ENCODE measurements at regions of chr3 and their contacts with region 1.

Region 1: GRCh38 chr3:115783938-115784738 is 160.8 kb downstream of the GAP43 start:
- DNase-seq: peak; percentile 92
- H3K4me3 Mint-ChIP-seq: peak overlapping the region; percentile 88
- H3K27ac Mint-ChIP-seq: peak overlapping the region; percentile 94
- H3K4me1 Mint-ChIP-seq: peaks cover 19% of the 10 kb centered on the region
- H3K27me3 Mint-ChIP-seq: no peaks in the 10 kb centered on the region

Region 2: DNA sequence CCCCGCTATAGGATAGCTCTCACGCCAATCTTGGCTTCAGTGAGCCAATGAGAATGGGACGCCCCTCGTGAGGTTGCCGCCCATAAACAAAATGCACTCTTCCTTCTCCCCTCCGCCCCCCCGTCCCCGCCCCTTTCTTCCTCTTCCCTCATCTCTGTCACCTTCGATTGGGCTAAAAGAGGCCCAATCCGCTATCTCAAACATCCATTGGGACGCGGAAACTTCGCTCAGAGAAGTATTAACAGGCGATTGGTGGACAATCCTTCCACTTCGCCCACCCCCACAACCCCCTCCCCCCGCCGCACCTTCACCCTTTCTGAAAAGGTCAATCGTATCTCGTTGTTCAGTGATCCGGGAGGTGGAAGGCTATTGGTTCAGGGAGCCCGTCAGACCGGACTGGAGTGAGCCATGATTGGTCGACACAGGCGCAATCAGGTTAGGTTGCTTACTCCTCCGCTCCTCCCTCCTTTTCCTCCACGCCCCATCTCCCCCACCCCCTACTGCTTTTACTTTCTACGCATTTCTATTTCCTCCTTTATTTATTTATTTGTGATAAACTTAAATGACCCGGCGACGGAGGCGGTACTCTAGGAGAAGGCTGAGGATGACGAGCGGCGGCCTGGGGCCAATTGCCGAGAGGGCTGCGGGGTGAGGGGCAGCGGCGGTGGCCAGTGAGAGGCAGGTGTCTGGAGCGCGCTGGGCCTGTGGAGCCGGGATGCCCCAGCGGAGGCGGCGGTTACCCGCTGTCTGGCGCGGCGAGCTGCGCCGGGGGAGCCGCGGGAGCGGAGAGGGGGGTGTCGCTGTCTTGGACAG is 636.6 kb before region 1 on chr3:
- CTCF ChIA-PET with region 1: interaction called, 16 read pairs
- POLR2A ChIA-PET with region 1: interaction called, 3 read pairs
- intact Hi-C with region 1: loop called (anchors 1 kb)
- DNase-seq: peak; percentile 98
- H3K4me3 Mint-ChIP-seq: peak overlapping the region; percentile 94
- H3K27ac Mint-ChIP-seq: peak overlapping the region; percentile 91
- H3K4me1 Mint-ChIP-seq: peaks cover 23% of the 10 kb centered on the region
- H3K27me3 Mint-ChIP-seq: peaks cover 2% of the 10 kb centered on the region

Region 3: DNA sequence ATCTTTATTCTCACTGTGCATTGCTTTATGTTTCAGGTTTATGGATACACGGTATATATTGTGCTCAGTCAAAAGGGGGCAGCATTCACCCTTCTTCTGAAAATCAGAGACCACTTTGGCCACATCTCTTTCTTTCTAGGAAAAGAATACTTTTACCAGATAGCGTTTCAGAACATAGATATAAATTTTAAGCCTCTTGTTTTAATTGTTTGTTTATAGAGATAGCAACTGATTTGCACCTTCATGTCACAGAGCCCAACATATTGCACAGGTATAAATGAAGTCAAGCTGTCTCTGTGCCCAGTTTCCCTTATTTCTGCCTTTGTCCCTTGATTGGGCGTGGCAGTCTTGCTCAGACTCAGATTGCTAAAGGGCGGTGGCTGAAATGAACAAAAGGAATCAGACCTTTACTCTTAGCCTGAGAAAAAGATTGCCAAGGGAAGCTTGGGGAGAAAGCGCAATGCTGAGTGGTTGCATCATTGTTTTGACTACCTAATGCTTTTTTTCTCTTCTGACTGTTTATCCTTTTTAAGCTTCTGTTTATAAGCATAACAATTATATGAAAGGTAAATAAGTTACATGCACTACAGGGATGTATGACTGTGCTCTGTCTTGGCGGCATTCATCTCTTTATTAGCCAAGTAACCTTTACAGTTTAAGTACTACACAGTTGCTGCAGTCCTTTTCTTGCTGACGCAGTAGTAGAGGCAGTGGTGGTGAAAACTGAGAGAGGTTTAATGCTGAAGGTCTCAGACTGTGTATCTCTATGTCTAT is 566.3 kb before region 1 on chr3:
- CTCF ChIA-PET with region 1: interaction called, 6 read pairs
- POLR2A ChIA-PET with region 1: no interaction called
- intact Hi-C with region 1: loop called (anchors 10 kb)
- DNase-seq: no peak
- H3K4me3 Mint-ChIP-seq: no peak overlapping the region
- H3K27ac Mint-ChIP-seq: no peak overlapping the region
- H3K4me1 Mint-ChIP-seq: no peaks in the 10 kb centered on the region
- H3K27me3 Mint-ChIP-seq: peaks cover 2% of the 10 kb centered on the region

Region 4: DNA sequence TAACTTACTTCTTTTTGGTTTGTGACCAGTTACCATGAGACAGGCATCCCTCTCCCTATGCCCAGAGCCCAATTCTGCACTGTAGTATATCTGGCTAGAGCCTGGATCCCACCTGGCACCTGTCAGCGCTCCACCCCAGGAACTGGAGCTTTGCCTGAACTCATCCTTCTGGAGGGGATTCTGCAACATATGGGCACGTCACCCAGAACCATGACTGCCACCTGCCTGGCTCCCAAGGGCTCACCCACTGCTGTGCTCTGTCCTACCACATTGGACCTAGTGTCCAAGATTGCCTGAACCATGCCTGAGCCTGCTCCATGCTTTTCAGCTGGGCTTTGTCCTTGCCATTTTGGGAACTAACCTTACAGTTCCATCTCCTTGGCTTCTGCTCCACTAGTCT is 181.9 kb before region 1 on chr3:
- CTCF ChIA-PET with region 1: no interaction called
- POLR2A ChIA-PET with region 1: no interaction called
- intact Hi-C with region 1: no loop called
- DNase-seq: no peak
- H3K4me3 Mint-ChIP-seq: no peak overlapping the region
- H3K27ac Mint-ChIP-seq: no peak overlapping the region
- H3K4me1 Mint-ChIP-seq: no peaks in the 10 kb centered on the region
- H3K27me3 Mint-ChIP-seq: peaks cover 4% of the 10 kb centered on the region

Region 5: DNA sequence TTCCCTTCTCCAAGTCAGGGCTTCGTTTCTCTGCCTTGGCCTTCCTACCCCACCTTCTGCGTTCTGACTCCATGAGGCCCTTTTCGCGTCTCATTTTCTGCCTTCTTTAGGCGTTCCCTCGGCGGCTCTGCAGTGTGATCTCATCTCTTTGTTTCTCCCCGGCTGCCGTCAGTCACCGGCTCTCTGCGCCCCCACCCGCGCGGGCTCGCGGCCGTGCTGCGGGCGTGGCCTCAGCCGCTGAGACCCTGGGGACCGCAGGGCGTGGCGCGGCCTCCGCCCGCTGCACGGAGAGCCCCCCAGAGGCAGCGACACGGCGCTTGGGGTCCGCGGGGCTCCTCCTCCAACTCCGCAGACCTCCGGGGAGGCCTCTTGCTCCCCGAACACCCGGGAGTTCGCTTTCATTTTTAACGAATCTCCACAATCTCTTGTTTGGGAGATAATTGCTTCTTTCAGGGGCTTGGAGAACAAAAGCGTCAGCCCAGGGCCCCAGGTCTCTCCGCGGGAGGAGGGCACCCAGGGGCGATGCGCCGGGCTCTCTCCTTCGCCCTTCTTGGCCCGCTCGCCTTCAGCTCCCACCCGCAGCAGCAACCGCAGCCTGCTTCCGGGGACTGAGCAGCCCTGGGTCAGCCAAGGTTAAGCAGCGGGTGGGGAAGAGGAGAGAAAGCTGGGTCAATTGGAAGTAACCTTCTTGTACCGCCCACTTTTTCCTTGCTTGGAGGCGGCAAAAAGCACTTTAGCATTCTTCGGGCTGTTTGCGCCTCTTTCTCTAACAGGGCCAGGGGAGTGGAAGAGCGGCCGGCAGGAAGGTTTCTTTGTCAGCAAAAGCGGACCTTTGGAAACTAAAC is 125.6 kb before region 1 on chr3:
- CTCF ChIA-PET with region 1: no interaction called
- POLR2A ChIA-PET with region 1: interaction called, 4 read pairs
- intact Hi-C with region 1: loop called (anchors 1 kb)
- DNase-seq: peak; percentile 86
- H3K4me3 Mint-ChIP-seq: peak overlapping the region; percentile 82
- H3K27ac Mint-ChIP-seq: peak overlapping the region; percentile 92
- H3K4me1 Mint-ChIP-seq: peaks cover 40% of the 10 kb centered on the region
- H3K27me3 Mint-ChIP-seq: no peaks in the 10 kb centered on the region

Region 6: DNA sequence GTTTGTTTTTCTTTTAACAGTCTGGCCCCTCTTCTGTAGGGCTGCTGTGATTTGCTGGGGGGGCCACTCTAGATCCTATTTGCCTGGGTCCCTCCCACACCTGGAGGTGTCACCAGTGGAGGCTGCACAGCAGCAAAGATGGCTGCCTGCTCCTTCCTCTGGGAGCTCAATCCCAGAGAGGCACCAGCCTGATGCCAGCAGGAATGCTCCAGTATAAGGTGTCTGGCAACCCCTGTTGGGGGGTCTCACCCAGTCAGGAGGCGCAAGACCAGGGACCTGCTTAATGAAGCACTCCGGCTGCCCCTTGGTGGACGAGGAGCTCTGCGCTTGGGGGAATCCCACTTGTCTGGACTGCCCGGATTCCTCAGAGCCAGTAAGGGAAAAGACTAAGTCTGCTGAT is 42.5 kb before region 1 on chr3:
- CTCF ChIA-PET with region 1: no interaction called
- POLR2A ChIA-PET with region 1: no interaction called
- intact Hi-C with region 1: no loop called
- DNase-seq: no peak
- H3K4me3 Mint-ChIP-seq: no peak overlapping the region
- H3K27ac Mint-ChIP-seq: no peak overlapping the region
- H3K4me1 Mint-ChIP-seq: no peaks in the 10 kb centered on the region
- H3K27me3 Mint-ChIP-seq: peaks cover 38% of the 10 kb centered on the region

Region 7: DNA sequence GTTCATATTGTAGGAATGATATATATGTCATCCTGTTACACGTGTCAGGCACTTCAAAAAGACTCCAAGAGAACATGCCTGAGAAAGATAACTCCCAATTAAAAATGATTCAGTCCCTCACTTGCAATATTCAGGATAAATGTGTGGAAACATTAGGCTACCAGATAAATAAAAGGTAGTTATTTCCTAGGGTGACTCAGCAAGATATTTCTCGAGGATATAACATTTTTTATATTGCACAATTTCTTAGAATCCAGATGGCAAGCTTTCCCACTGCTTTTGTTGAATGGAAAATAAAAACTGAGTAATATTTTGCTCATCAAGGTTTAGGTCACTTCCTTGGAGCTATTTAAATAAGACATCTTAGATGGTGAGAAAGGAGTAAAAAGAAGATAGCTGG is 20.6 kb after region 1 on chr3:
- CTCF ChIA-PET with region 1: interaction called, 16 read pairs
- POLR2A ChIA-PET with region 1: interaction called, 4 read pairs
- intact Hi-C with region 1: no loop called
- DNase-seq: no peak
- H3K4me3 Mint-ChIP-seq: no peak overlapping the region
- H3K27ac Mint-ChIP-seq: no peak overlapping the region
- H3K4me1 Mint-ChIP-seq: peaks cover 5% of the 10 kb centered on the region
- H3K27me3 Mint-ChIP-seq: peaks cover 31% of the 10 kb centered on the region

Region 8: GRCh38 chr3:115819785-115820384 is 35.7 kb after region 1 on chr3:
- CTCF ChIA-PET with region 1: interaction called, 21 read pairs
- POLR2A ChIA-PET with region 1: no interaction called
- intact Hi-C with region 1: no loop called
- DNase-seq: peak; percentile 67
- H3K4me3 Mint-ChIP-seq: no peak overlapping the region
- H3K27ac Mint-ChIP-seq: no peak overlapping the region
- H3K4me1 Mint-ChIP-seq: no peaks in the 10 kb centered on the region
- H3K27me3 Mint-ChIP-seq: no peaks in the 10 kb centered on the region